Mammary epithelial cell (primary cell): ENCODE measurements at regions of chr6 and their contacts with region 1.

Region 1: DNA sequence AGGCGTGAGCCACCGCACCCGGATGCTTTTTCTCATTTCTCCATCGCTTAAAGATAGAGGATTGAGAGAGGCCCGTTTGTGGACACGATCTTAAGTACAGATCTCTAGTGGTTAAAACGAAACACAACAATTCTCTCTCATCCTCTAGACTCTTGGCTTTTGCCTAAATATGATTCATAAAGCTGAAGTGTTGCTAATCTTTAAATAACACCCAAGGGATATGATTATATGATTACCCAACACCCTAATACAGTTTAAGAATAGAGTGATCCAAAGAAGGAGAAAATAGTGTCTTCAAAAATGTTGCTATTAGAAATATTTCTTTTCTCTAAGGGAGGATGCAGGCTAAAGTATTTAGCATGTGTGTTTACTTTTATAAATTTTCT is 50.4 kb downstream of the MTHFD1L start:
- DNase-seq: peak; percentile 8
- H3K4me3 ChIP-seq: no peak overlapping the region
- H3K27ac ChIP-seq: no peak overlapping the region
- H3K4me1 ChIP-seq: no peaks in the 10 kb centered on the region
- H3K27me3 ChIP-seq: no peaks in the 10 kb centered on the region
- CTCF ChIP-seq: no peak

Region 2: DNA sequence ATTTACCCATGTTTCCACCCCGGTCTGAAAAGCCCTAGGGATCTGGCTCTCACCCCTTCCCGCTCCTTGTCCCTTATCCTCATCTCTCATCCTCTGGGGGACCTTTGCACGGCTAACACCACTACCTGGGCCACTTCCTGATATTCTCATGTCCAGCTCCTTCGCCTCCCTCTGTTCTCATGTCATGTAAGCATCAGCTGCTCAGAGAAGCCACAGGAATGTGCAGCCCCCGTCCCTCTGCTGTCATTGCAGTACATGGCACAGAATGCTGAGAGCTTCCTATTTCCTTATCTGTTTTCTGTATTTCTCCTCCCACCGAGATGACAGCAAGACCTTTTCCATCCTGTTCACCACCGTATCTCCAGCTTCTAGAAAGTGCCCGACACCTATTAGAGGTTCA is 52.0 kb after region 1 on chr6:
- CTCF ChIA-PET with region 1: no interaction called
- dilution Hi-C with region 1: loop called (anchors 5 kb)
- in situ Hi-C with region 1: no loop called
- intact Hi-C with region 1: no loop called
- DNase-seq: no peak
- H3K4me3 ChIP-seq: no peak overlapping the region
- H3K27ac ChIP-seq: no peak overlapping the region
- H3K4me1 ChIP-seq: no peaks in the 10 kb centered on the region
- H3K27me3 ChIP-seq: no peaks in the 10 kb centered on the region
- CTCF ChIP-seq: no peak

Region 3: DNA sequence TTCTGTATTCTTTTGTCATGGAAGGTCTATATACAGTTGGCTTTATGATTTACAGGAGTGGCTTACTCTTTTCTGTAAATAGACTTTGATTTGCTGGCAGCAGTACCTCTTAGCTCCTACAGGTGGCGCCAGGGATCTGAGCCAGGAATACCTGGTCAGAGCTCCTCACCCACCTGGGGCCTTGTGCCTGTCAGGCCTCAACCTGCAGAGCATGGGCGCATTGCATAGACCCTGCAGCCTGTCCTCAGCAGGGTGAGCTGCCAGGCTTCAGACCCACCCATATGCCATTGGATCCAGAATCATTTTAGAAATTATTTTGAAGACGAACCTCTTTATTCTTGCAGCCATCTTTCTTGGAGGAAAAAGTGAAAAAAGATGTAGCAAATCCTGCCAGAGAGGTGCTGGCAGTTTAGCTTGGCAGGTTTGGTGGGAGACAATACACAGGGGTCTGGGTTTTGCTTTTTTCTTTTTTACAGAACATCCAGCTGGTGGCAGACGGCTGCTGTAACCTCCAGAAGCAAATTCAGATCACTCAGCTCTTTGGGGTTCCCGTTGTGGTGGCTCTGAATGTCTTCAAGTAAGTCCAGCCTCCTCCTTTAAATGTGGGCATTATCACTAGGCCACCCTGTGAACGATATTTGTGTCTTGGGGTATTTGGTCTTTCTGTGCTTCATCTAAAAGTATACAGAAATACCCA is 98.7 kb after region 1 on chr6:
- CTCF ChIA-PET with region 1: no interaction called
- dilution Hi-C with region 1: no loop called
- in situ Hi-C with region 1: no loop called
- intact Hi-C with region 1: no loop called
- DNase-seq: peak; percentile 53
- H3K4me3 ChIP-seq: no peak overlapping the region
- H3K27ac ChIP-seq: no peak overlapping the region
- H3K4me1 ChIP-seq: no peaks in the 10 kb centered on the region
- H3K27me3 ChIP-seq: no peaks in the 10 kb centered on the region
- CTCF ChIP-seq: peak; percentile 99